Panc1 (cell line): ENCODE measurements at regions of chr7 and their contacts with region 1.

Region 1: GRCh38 chr7:3482147-3482964 is 181.3 kb downstream of the SDK1 start:
- DNase-seq: peak; percentile 70
- ATAC-seq: peak; percentile 94
- H3K4me3 ChIP-seq: no peak overlapping the region
- H3K27ac ChIP-seq: peak overlapping the region; percentile 67
- H3K4me1 ChIP-seq: peaks cover 14% of the 10 kb centered on the region
- H3K27me3 ChIP-seq: no peaks in the 10 kb centered on the region
- CTCF ChIP-seq: peak; percentile 92

Region 2: DNA sequence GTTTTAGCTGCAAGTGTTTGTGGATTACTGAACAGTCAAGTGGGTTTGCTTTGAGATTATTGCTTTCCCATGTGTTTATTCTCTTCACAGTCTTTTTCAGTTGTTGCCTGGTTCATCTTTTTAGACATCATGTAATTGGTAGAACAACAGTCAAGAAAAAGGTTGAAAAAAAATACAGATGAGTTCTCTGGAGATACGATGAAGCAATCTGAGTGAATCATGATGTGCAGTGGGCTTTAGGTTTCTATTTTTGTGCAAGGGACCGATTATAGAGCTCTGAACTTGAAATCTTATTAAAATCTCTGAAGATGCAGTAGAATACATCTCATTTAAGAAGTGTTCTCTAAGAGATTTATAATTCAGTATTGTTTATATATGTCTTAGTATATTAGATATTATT is 35.6 kb before region 1 on chr7:
- CTCF ChIA-PET with region 1: no interaction called
- POLR2A ChIA-PET with region 1: interaction called, 21 read pairs
- in situ Hi-C with region 1: no loop called
- intact Hi-C with region 1: no loop called
- DNase-seq: no peak
- ATAC-seq: no peak
- H3K4me3 ChIP-seq: no peak overlapping the region
- H3K27ac ChIP-seq: no peak overlapping the region
- H3K4me1 ChIP-seq: peaks cover 9% of the 10 kb centered on the region; the same call in 1 of the 2 replicates
- H3K27me3 ChIP-seq: no peaks in the 10 kb centered on the region
- CTCF ChIP-seq: no peak

Region 3: GRCh38 chr7:3497796-3498195 is 15.4 kb after region 1 on chr7:
- CTCF ChIA-PET with region 1: interaction called, 3 read pairs
- POLR2A ChIA-PET with region 1: interaction called, 23 read pairs
- in situ Hi-C with region 1: no loop called
- intact Hi-C with region 1: no loop called
- DNase-seq: no peak
- ATAC-seq: no peak
- H3K4me3 ChIP-seq: no peak overlapping the region
- H3K27ac ChIP-seq: peak overlapping the region; percentile 42
- H3K4me1 ChIP-seq: peaks cover 32% of the 10 kb centered on the region
- H3K27me3 ChIP-seq: no peaks in the 10 kb centered on the region
- CTCF ChIP-seq: no peak